ENCODE measurements at regions of chr9 and their contacts with region 1.

Region 1: DNA sequence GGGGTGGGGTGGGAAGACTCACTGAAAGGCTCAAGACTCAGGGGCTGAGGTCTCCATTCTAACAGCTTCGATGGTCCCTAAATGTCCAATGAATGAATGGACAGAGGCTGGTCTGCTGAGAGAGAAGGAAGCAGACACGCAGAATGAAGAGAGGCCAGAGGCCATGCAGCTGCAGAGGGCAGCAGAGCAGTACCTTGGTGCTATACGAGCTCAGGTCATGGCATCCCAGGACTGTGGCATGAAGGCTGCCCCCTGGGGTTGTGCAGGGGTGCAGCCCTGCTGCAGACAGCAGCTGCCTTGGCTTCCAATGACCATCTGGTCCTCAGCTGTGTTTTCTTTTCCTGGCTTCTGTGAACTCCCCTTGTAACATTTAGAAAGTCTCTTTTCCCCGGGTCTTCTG is 15.2 kb upstream of the CORO2A start:
- DNase-seq: no peak
- ATAC-seq: no peak
- H3K4me3 ChIP-seq: no peak overlapping the region
- H3K4me3 Mint-ChIP-seq: no peak overlapping the region
- H3K27ac ChIP-seq: no peak overlapping the region
- H3K27ac Mint-ChIP-seq: no peak overlapping the region
- H3K4me1 ChIP-seq: peaks cover 4 to 10% of the 10 kb centered on the region in 2 donors
- H3K4me1 Mint-ChIP-seq: peaks cover 5% of the 10 kb centered on the region
- H3K27me3 ChIP-seq: no peaks in the 10 kb centered on the region
- H3K27me3 Mint-ChIP-seq: no peaks in the 10 kb centered on the region
- CTCF ChIP-seq: no peak

Region 2: DNA sequence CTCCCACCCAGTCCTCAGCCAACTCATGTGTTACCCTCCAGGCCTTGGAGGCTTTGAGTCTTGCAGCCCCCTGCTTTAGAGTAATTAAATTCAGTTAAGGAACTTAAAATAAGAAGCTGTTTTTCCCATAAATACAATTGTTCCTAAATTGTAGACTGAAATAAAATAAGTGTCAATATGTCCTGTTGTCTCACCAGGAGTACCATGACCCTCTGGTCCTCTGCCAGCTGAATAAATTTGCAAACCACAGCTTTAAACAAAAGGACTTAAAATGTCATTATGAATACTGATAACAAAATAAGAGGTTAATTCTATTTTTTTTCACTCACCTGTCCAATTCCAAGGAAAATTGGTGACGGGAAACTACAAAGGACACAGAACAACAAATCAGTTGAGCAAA is 1839.7 kb before region 1 on chr9:
- CTCF ChIA-PET with region 1: no interaction called
- POLR2A ChIA-PET with region 1: no interaction called
- intact Hi-C with region 1: no loop called
- DNase-seq: no peak
- ATAC-seq: no peak
- H3K4me3 ChIP-seq: no peak overlapping the region
- H3K4me3 Mint-ChIP-seq: no peak overlapping the region
- H3K27ac ChIP-seq: no peak overlapping the region
- H3K27ac Mint-ChIP-seq: no peak overlapping the region
- H3K4me1 ChIP-seq: no peaks in the 10 kb centered on the region
- H3K4me1 Mint-ChIP-seq: no peaks in the 10 kb centered on the region
- H3K27me3 ChIP-seq: no peaks in the 10 kb centered on the region
- H3K27me3 Mint-ChIP-seq: no peaks in the 10 kb centered on the region
- CTCF ChIP-seq: no peak

Region 3: DNA sequence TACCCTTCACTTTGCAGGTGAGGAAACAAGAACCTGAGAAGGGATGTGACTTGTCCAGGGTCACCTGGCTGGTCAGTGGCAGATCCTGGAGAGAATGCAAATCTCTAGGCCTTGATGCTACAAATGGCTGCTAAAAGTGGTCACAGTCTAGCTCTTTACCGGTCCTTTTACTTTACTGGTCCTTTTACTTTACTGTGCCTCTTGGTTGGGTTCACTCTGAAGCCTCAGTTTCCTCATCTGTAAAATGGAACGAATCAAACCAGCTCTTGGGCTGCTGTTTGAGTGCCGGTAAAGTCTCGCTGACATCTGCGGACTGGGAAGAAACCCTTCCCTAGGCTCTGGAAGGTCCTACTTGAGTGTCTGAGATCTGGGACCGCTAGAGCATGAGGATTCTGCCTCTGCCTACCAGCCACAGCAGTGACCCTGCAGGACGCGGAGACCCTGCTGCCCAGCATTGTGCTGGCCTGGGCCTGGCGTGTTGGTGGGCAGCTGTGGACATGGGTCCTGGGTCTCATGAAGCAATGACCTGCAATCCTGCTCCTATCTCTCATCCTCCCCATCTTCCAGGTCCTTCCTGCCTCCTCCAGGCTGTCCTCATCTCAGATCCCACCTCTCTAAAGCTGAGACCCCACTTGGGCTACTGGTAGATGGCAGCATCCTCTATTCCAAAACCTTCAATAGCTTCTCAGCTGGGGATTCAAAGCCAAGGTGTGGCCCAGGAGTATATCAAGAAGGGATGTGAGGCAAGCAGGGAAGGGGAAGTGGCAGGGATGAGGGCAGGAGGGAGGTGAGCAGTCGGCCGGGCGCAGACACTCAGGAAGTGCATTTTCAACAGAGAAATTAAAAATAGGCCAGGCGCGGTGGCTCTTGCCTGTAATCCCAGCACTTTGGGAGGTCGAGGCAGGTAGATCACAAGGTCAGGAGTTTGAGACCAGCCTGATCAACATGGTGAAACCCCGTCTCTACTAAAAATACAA is 28.4 kb before region 1 on chr9:
- CTCF ChIA-PET with region 1: no interaction called
- POLR2A ChIA-PET with region 1: no interaction called
- intact Hi-C with region 1: no loop called
- DNase-seq: no peak
- ATAC-seq: no peak
- H3K4me3 ChIP-seq: no peak overlapping the region
- H3K4me3 Mint-ChIP-seq: no peak overlapping the region
- H3K27ac ChIP-seq: no peak overlapping the region
- H3K27ac Mint-ChIP-seq: no peak overlapping the region
- H3K4me1 ChIP-seq: no peaks in the 10 kb centered on the region
- H3K4me1 Mint-ChIP-seq: no peaks in the 10 kb centered on the region
- H3K27me3 ChIP-seq: no peaks in the 10 kb centered on the region
- H3K27me3 Mint-ChIP-seq: no peaks in the 10 kb centered on the region
- CTCF ChIP-seq: no peak

Region 4: GRCh38 chr9:98263482-98264357 is 56.1 kb after region 1 on chr9:
- CTCF ChIA-PET with region 1: interaction called, 35 read pairs
- POLR2A ChIA-PET with region 1: no interaction called
- intact Hi-C with region 1: loop called (anchors 1 kb)
- DNase-seq: peak; percentile 85
- ATAC-seq: peak; percentile 100
- H3K4me3 ChIP-seq: no peak overlapping the region
- H3K4me3 Mint-ChIP-seq: no peak overlapping the region
- H3K27ac ChIP-seq: no peak overlapping the region
- H3K27ac Mint-ChIP-seq: no peak overlapping the region
- H3K4me1 ChIP-seq: no peaks in the 10 kb centered on the region
- H3K4me1 Mint-ChIP-seq: no peaks in the 10 kb centered on the region
- H3K27me3 ChIP-seq: no peaks in the 10 kb centered on the region
- H3K27me3 Mint-ChIP-seq: peaks cover 21% of the 10 kb centered on the region
- CTCF ChIP-seq: peak; percentile 94

Region 5: GRCh38 chr9:98351370-98351769 is 143.8 kb after region 1 on chr9:
- CTCF ChIA-PET with region 1: no interaction called
- POLR2A ChIA-PET with region 1: no interaction called
- intact Hi-C with region 1: no loop called
- DNase-seq: no peak
- ATAC-seq: no peak
- H3K4me3 ChIP-seq: no peak overlapping the region
- H3K4me3 Mint-ChIP-seq: no peak overlapping the region
- H3K27ac ChIP-seq: no peak overlapping the region
- H3K27ac Mint-ChIP-seq: no peak overlapping the region
- H3K4me1 ChIP-seq: no peaks in the 10 kb centered on the region
- H3K4me1 Mint-ChIP-seq: no peaks in the 10 kb centered on the region
- H3K27me3 ChIP-seq: peaks cover 0 to 14% (median 6%) of the 10 kb centered on the region in 4 experiments
- H3K27me3 Mint-ChIP-seq: peaks cover 46% of the 10 kb centered on the region
- CTCF ChIP-seq: no peak

Region 6: DNA sequence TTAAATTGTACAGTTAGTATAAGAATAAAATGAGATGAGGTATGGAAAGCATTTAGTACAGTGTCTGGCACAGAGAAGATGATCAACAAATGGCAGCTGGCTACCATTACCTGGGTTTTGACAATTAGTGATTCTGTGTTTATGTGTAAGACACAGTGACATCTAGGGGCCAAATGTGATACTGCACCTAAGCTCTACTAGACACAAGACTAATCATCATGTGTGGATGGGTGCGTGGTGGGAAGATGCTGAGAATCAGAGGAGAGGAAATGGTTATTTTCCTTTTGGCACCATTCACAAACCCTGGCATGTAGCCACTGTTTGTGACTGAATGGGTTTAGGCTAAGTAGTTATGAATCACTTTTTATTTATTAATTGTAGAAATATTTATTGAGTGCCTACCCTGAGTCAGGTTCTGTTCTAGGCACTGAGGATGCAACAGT is 157.6 kb after region 1 on chr9:
- CTCF ChIA-PET with region 1: no interaction called
- POLR2A ChIA-PET with region 1: no interaction called
- intact Hi-C with region 1: no loop called
- DNase-seq: no peak
- ATAC-seq: no peak
- H3K4me3 ChIP-seq: no peak overlapping the region
- H3K4me3 Mint-ChIP-seq: no peak overlapping the region
- H3K27ac ChIP-seq: no peak overlapping the region
- H3K27ac Mint-ChIP-seq: no peak overlapping the region
- H3K4me1 ChIP-seq: no peaks in the 10 kb centered on the region
- H3K4me1 Mint-ChIP-seq: no peaks in the 10 kb centered on the region
- H3K27me3 ChIP-seq: peaks cover 0 to 7% (median 0%) of the 10 kb centered on the region in 4 experiments
- H3K27me3 Mint-ChIP-seq: peaks cover 14% of the 10 kb centered on the region
- CTCF ChIP-seq: peak; percentile 33